MCF 10A (cell line): ENCODE measurements at regions of chr20 and their contacts with region 1.

Region 1: GRCh38 chr20:51372176-51372803 is 170.2 kb downstream of the NFATC2 start:
- DNase-seq: peak; percentile 75
- H3K4me3 Mint-ChIP-seq: no peak overlapping the region
- H3K27ac Mint-ChIP-seq: no peak overlapping the region
- H3K4me1 Mint-ChIP-seq: no peaks in the 10 kb centered on the region
- H3K27me3 Mint-ChIP-seq: no peaks in the 10 kb centered on the region
- CTCF ChIP-seq: peak; percentile 90

Region 2: GRCh38 chr20:51104960-51105920 is 267.1 kb before region 1 on chr20:
- CTCF ChIA-PET with region 1: no interaction called
- POLR2A ChIA-PET with region 1: no interaction called
- intact Hi-C with region 1: no loop called
- DNase-seq: no peak
- H3K4me3 Mint-ChIP-seq: no peak overlapping the region
- H3K27ac Mint-ChIP-seq: no peak overlapping the region
- H3K4me1 Mint-ChIP-seq: no peaks in the 10 kb centered on the region
- H3K27me3 Mint-ChIP-seq: peaks cover 25% of the 10 kb centered on the region
- CTCF ChIP-seq: no peak

Region 3: GRCh38 chr20:51238421-51239305 is 133.6 kb before region 1 on chr20:
- CTCF ChIA-PET with region 1: no interaction called
- POLR2A ChIA-PET with region 1: no interaction called
- intact Hi-C with region 1: no loop called
- DNase-seq: no peak
- H3K4me3 Mint-ChIP-seq: no peak overlapping the region
- H3K27ac Mint-ChIP-seq: no peak overlapping the region
- H3K4me1 Mint-ChIP-seq: no peaks in the 10 kb centered on the region
- H3K27me3 Mint-ChIP-seq: peaks cover 13% of the 10 kb centered on the region
- CTCF ChIP-seq: no peak

Region 4: DNA sequence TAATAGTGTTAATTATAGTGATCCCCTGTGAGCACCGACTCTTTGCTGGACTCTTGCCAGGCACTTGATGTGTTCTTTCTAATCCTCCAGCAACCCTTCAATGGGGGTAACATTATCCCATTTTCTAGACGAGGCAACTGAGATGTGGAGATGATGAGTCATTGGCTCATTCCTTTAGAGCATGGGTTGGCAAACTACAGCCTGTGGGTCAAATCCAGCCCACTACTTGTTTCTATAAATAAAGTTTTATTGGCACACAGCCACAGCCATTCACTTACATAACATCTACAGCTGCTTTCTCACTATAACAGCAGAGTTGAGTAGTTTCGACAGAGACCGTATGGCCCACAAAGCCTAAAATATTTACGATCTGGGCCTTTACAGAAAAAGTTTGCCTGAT is 99.9 kb before region 1 on chr20:
- CTCF ChIA-PET with region 1: no interaction called
- POLR2A ChIA-PET with region 1: no interaction called
- intact Hi-C with region 1: no loop called
- DNase-seq: peak; percentile 60
- H3K4me3 Mint-ChIP-seq: no peak overlapping the region
- H3K27ac Mint-ChIP-seq: no peak overlapping the region
- H3K4me1 Mint-ChIP-seq: no peaks in the 10 kb centered on the region
- H3K27me3 Mint-ChIP-seq: peaks cover 11% of the 10 kb centered on the region
- CTCF ChIP-seq: no peak

Region 5: GRCh38 chr20:51326201-51326819 is 46.0 kb before region 1 on chr20:
- CTCF ChIA-PET with region 1: interaction called, 11 read pairs
- POLR2A ChIA-PET with region 1: no interaction called
- intact Hi-C with region 1: no loop called
- DNase-seq: peak; percentile 70
- H3K4me3 Mint-ChIP-seq: no peak overlapping the region
- H3K27ac Mint-ChIP-seq: peak overlapping the region; percentile 8
- H3K4me1 Mint-ChIP-seq: peaks cover 12% of the 10 kb centered on the region
- H3K27me3 Mint-ChIP-seq: no peaks in the 10 kb centered on the region
- CTCF ChIP-seq: peak; percentile 41

Region 6: DNA sequence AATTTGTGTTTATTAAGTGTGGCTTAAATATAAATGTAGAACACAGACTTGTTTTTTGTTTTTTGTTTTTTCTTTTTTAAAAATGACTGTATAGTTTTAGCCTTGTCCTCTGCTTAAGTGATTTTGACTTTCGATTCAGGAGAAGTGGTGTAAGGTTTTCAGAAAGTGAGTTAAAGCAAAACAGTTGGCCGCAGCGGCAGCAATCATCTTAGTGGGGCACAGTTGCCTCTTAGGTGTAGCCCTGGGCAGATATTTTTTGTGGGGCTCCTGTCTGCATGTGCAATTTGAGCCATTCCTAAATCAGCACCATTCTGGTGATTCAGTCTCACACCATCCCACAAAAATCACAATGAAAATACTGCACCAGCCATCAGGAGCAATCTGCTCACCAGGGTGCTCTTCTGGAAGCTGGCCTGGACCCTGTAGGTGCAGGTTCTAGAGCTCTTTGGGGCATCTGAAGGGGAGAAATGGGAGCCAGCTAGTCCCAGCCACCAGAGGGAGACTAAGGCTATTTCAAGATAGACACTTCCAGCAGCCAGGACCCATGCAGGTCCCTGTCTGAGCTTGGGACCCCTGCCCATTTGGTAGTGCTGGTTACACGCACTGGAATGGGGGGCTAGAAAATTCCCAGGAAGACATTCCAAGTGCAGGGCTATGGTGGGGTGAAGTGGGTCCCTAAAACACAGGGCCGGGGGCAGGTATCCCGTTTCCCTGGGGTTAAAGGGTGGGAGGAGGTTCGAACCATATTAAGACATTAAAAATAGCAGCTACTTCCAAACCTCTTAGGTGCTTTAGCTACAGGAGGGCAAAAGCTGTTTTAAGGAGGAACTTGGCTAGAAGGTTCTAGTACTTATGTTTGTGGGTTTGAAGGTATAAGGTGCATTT is 13.6 kb after region 1 on chr20:
- CTCF ChIA-PET with region 1: interaction called, 27 read pairs
- POLR2A ChIA-PET with region 1: no interaction called
- intact Hi-C with region 1: no loop called
- DNase-seq: peak; percentile 52
- H3K4me3 Mint-ChIP-seq: no peak overlapping the region
- H3K27ac Mint-ChIP-seq: no peak overlapping the region
- H3K4me1 Mint-ChIP-seq: no peaks in the 10 kb centered on the region
- H3K27me3 Mint-ChIP-seq: no peaks in the 10 kb centered on the region
- CTCF ChIP-seq: peak; percentile 51

Region 7: GRCh38 chr20:51393571-51393970 is 21.3 kb after region 1 on chr20:
- CTCF ChIA-PET with region 1: interaction called, 23 read pairs
- POLR2A ChIA-PET with region 1: no interaction called
- intact Hi-C with region 1: no loop called
- DNase-seq: no peak
- H3K4me3 Mint-ChIP-seq: no peak overlapping the region
- H3K27ac Mint-ChIP-seq: no peak overlapping the region
- H3K4me1 Mint-ChIP-seq: no peaks in the 10 kb centered on the region
- H3K27me3 Mint-ChIP-seq: peaks cover 33% of the 10 kb centered on the region
- CTCF ChIP-seq: no peak

Region 8: GRCh38 chr20:51602131-51602530 is 229.8 kb after region 1 on chr20:
- CTCF ChIA-PET with region 1: interaction called, 128 read pairs
- POLR2A ChIA-PET with region 1: interaction called, 3 read pairs
- intact Hi-C with region 1: no loop called
- DNase-seq: no peak
- H3K4me3 Mint-ChIP-seq: no peak overlapping the region
- H3K27ac Mint-ChIP-seq: no peak overlapping the region
- H3K4me1 Mint-ChIP-seq: no peaks in the 10 kb centered on the region
- H3K27me3 Mint-ChIP-seq: no peaks in the 10 kb centered on the region
- CTCF ChIP-seq: no peak

Region 9: DNA sequence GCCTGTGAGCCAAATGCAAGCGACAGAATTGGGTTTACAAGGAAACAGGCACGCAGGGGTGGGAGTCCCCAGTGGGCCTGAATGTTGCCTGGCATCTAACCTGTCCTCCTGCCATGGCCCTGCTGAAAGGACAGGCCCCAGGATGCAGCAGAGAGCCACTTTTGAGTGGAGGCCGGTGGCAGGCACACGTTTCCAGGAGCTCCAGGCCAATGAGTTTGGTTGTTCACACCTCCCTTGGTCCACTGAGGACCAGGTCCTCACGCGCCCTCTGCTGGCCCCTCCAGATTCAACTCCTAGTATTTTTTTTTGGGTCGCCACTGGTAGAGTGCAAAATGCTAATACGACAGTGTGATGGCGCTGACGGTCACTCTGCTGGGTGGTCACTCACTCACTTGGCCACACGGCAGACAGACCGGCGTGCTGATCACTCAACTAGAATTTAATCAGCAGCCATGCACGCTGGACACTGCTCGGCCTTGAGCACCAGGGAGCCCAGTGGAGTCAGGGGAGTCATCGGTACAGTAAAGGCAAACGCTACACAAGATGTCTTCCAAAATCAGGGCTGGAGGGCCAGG is 252.0 kb after region 1 on chr20:
- CTCF ChIA-PET with region 1: interaction called, 60 read pairs
- POLR2A ChIA-PET with region 1: no interaction called
- intact Hi-C with region 1: loop called (anchors 1 kb)
- DNase-seq: peak; percentile 79
- H3K4me3 Mint-ChIP-seq: no peak overlapping the region
- H3K27ac Mint-ChIP-seq: no peak overlapping the region
- H3K4me1 Mint-ChIP-seq: no peaks in the 10 kb centered on the region
- H3K27me3 Mint-ChIP-seq: no peaks in the 10 kb centered on the region
- CTCF ChIP-seq: peak; percentile 58